ENCODE measurements at regions of chr5 and their contacts with region 1.

Region 1: DNA sequence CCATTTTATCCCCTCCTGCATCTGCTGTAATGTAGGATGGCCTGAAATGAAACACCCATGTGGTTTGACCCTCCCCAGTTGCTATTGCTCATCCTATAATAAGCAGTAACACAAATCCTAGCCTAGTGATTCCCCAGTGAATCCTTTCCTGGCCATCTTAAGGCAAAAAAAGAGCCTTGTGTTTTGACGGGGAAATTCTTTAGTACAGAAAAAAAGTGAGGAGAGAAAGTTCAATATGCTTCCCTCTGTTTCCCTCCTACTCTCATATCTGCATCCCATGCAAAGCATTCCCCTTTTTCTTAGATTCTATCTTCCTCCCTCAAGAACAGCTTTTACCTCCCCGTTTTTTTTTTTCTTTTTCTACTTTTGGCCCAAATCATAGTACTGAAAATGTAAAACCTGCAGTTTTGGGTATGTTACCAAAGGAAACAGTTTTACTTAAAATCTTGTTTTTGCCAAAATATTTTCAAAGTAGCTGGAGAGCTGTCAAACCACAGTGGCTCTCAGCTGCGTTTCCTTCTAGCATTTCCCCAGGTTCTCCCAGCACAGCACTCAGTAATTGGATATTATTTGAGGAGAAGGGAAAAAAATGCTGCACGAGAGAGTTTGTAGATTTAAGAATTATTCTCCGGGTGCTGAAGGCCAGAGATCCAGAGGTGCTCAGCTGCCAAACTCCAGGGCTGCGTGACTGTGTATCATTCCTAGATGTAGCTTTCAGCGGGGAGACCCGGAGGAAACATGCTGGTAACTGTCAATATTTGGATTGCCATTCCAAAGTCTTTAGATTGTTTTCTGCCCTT is 321.4 kb downstream of the NPR3 start:
- DNase-seq: peak; percentile 37
- H3K4me3 ChIP-seq: no peak overlapping the region
- H3K27me3 ChIP-seq: no peaks in the 10 kb centered on the region
- CTCF ChIP-seq: no peak

Region 2: GRCh38 chr5:32928761-32929160 is 103.7 kb before region 1 on chr5:
- CTCF ChIA-PET with region 1: no interaction called
- POLR2A ChIA-PET with region 1: interaction called, 21 read pairs
- DNase-seq: no peak
- H3K4me3 ChIP-seq: no peak overlapping the region
- H3K27me3 ChIP-seq: no peaks in the 10 kb centered on the region
- CTCF ChIP-seq: no peak

Region 3: DNA sequence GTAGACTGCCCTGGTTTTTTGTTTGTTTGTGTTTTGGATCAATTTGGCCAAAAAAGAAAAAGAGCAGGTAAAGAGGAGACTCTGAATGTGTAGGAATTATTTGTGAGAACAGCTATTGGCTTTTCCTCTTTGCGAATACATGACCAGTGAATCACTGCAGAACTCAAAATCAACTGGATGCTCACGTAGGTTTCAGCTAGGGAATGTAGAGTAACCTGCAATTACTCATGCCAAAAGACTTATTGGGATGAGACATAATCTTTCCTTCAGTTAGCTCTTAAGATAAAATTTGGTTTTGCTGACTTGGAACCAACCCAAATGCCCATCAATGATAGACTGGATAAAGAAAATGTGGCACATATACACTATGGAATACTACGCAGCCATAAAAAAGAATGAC is 26.6 kb after region 1 on chr5:
- CTCF ChIA-PET with region 1: no interaction called
- POLR2A ChIA-PET with region 1: no interaction called
- DNase-seq: no peak
- H3K4me3 ChIP-seq: no peak overlapping the region
- H3K27me3 ChIP-seq: no peaks in the 10 kb centered on the region
- CTCF ChIP-seq: no peak

Measured in BJ (cell line).